GM12878 (cell line): ENCODE measurements at regions of chr2 and their contacts with region 1.

Region 1: DNA sequence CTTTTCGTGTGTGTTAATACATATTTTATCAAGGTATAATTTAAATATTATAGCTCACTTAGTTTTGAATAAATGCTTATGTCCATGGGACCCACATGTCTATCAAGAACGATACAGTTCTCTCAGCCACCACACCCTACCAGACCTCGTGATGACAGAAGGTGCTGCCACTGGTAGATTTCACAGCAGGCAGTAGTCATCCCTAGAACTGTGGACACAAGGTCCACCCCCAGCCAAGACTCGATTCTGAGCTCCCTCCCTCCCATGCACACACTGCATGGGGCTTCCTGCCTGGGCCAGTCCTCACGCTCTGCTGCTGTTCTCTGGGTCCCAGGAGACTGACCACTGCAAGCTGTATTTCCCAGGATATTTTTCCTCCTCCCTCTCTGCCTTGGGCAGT is 26.5 kb upstream of the CREB1 start:
- DNase-seq: no peak
- ATAC-seq: peak; percentile 90
- H3K4me3 ChIP-seq: no peak overlapping the region
- H3K27ac ChIP-seq: peak overlapping the region; percentile 3; the same call in 1 of the 2 replicates
- H3K4me1 ChIP-seq: peaks cover 33% of the 10 kb centered on the region
- H3K27me3 ChIP-seq: no peaks in the 10 kb centered on the region
- CTCF ChIP-seq: no peak
- EP300 ChIP-seq: no peak
- POLR2A ChIP-seq: no peak
- RAD21 ChIP-seq: no peak

Region 2: DNA sequence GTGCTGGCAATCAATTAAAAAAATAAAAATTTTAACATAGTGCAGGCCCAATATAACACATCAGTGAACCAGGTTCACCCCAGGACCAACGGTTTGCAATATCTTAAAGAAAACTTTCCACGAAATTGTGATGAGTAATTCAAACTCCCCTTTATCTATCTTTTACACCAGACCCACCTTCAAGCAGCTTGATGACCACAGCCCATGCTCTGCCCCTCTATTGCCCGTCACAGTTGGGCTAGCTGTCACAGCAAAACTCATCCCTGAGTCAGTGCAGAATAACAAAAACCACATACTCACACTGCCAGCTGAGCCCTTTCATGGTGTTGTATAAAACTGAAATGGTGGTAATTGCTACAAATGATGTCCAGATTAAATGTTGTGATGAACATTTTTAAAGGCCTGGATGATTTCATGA is 85.9 kb before region 1 on chr2:
- CTCF ChIA-PET with region 1: no interaction called
- POLR2A ChIA-PET with region 1: no interaction called
- RAD21 ChIA-PET with region 1: no interaction called
- SMC1A ChIA-PET with region 1: no interaction called
- in situ Hi-C with region 1: no loop called
- intact Hi-C with region 1: no loop called
- DNase-seq: no peak
- ATAC-seq: no peak
- H3K4me3 ChIP-seq: no peak overlapping the region
- H3K27ac ChIP-seq: no peak overlapping the region
- H3K4me1 ChIP-seq: no peaks in the 10 kb centered on the region
- H3K27me3 ChIP-seq: no peaks in the 10 kb centered on the region
- CTCF ChIP-seq: no peak
- EP300 ChIP-seq: no peak
- POLR2A ChIP-seq: no peak
- RAD21 ChIP-seq: no peak

Region 3: DNA sequence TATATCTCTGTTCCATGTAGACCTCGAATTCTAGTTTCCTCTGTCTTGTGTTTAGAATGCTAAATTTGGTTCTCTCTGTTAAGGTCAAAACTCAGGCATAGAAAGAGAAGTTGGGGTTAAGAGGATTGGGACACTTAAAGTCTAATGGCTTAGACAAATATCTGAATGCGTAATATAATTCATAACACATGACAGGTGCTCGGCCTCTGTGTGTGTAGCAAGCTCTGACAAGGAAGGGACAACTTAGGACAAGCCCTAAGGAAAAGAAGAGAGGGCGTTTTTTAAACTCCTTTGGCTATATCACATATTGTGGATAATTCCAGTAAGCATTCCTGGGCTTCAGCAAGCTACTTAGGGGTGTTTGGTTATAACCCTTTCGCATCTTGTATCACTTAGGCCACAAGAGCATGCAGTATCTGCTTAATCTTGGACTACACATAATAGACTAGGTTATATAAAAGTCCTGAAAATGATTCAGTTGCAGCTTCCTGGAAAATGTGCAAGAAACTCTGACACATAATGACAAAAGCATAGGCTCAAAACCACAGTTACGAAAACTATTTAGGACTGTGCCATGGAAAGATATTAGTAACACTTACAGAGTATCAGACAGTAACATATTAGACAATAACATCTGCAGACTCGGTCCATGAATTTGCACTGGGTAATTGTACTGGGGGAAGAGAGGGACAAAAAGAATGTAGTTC is 10.5 kb after region 1 on chr2:
- CTCF ChIA-PET with region 1: interaction called, 8 read pairs
- POLR2A ChIA-PET with region 1: interaction called, 3 read pairs
- RAD21 ChIA-PET with region 1: interaction called, 5 read pairs
- SMC1A ChIA-PET with region 1: interaction called, 12 read pairs
- in situ Hi-C with region 1: no loop called
- intact Hi-C with region 1: no loop called
- DNase-seq: no peak
- ATAC-seq: no peak
- H3K4me3 ChIP-seq: no peak overlapping the region
- H3K27ac ChIP-seq: no peak overlapping the region
- H3K4me1 ChIP-seq: no peaks in the 10 kb centered on the region
- H3K27me3 ChIP-seq: no peaks in the 10 kb centered on the region
- CTCF ChIP-seq: no peak
- EP300 ChIP-seq: no peak
- POLR2A ChIP-seq: no peak
- RAD21 ChIP-seq: no peak

Region 4: DNA sequence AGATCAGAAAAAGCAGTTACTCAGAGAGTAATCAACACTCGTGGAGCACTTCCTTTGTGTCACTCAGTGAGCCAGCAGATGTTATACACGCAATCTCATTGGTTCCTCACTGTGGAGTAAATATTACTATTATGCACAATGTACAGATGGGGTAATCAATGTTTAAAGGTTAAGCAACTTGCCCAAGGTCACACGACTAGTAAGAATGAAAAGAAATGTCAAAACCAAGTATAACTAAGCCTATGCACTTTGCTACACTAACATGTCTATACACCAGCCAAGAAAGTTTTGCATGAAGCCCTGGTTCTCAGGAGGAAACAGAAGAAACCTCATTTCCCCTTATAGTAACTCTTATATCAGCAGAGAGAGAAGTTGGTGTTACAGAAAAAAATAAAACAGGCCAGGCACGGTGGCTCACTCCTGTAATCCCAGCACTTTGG is 116.5 kb after region 1 on chr2:
- CTCF ChIA-PET with region 1: interaction called, 3 read pairs
- POLR2A ChIA-PET with region 1: interaction called, 10 read pairs
- RAD21 ChIA-PET with region 1: interaction called, 12 read pairs
- SMC1A ChIA-PET with region 1: interaction called, 6 read pairs
- in situ Hi-C with region 1: no loop called
- intact Hi-C with region 1: no loop called
- DNase-seq: no peak
- ATAC-seq: peak; percentile 37
- H3K4me3 ChIP-seq: no peak overlapping the region
- H3K27ac ChIP-seq: peak overlapping the region; percentile 51
- H3K4me1 ChIP-seq: peaks cover 22% of the 10 kb centered on the region
- H3K27me3 ChIP-seq: no peaks in the 10 kb centered on the region
- CTCF ChIP-seq: no peak
- EP300 ChIP-seq: no peak
- POLR2A ChIP-seq: no peak
- RAD21 ChIP-seq: no peak

Region 5: DNA sequence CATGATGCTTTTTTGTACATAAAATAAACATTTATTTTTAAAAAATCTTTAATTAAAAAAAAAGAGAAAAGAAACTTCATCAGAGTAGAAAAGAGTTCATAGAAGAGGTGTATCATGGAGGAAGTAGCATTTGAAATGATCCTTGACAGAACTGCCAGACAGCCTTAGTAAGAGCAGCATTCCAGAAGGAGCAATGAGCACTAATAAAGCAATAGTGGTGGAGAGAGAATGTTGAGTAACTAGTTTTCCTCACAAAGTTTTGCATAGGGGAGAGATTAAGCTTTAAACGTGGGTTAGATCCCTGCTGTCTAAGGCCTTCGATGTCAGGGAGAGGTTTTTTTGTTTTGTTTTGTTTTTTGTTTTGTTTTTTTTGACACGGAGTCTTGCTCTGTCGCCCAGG is 151.8 kb after region 1 on chr2:
- CTCF ChIA-PET with region 1: no interaction called
- POLR2A ChIA-PET with region 1: no interaction called
- RAD21 ChIA-PET with region 1: no interaction called
- SMC1A ChIA-PET with region 1: no interaction called
- in situ Hi-C with region 1: no loop called
- intact Hi-C with region 1: no loop called
- DNase-seq: no peak
- ATAC-seq: no peak
- H3K4me3 ChIP-seq: no peak overlapping the region
- H3K27ac ChIP-seq: no peak overlapping the region
- H3K4me1 ChIP-seq: no peaks in the 10 kb centered on the region
- H3K27me3 ChIP-seq: no peaks in the 10 kb centered on the region
- CTCF ChIP-seq: no peak
- EP300 ChIP-seq: no peak
- POLR2A ChIP-seq: no peak
- RAD21 ChIP-seq: no peak

Region 6: GRCh38 chr2:207914716-207915115 is 411.5 kb after region 1 on chr2:
- CTCF ChIA-PET with region 1: no interaction called
- POLR2A ChIA-PET with region 1: no interaction called
- RAD21 ChIA-PET with region 1: no interaction called
- SMC1A ChIA-PET with region 1: no interaction called
- in situ Hi-C with region 1: no loop called
- intact Hi-C with region 1: no loop called
- DNase-seq: no peak
- ATAC-seq: no peak
- H3K4me3 ChIP-seq: no peak overlapping the region
- H3K27ac ChIP-seq: no peak overlapping the region
- H3K4me1 ChIP-seq: no peaks in the 10 kb centered on the region
- H3K27me3 ChIP-seq: no peaks in the 10 kb centered on the region
- CTCF ChIP-seq: no peak
- EP300 ChIP-seq: no peak
- POLR2A ChIP-seq: no peak
- RAD21 ChIP-seq: no peak